GM12878 (cell line): ENCODE measurements at regions of chr2 and their contacts with region 1.

Region 1: DNA sequence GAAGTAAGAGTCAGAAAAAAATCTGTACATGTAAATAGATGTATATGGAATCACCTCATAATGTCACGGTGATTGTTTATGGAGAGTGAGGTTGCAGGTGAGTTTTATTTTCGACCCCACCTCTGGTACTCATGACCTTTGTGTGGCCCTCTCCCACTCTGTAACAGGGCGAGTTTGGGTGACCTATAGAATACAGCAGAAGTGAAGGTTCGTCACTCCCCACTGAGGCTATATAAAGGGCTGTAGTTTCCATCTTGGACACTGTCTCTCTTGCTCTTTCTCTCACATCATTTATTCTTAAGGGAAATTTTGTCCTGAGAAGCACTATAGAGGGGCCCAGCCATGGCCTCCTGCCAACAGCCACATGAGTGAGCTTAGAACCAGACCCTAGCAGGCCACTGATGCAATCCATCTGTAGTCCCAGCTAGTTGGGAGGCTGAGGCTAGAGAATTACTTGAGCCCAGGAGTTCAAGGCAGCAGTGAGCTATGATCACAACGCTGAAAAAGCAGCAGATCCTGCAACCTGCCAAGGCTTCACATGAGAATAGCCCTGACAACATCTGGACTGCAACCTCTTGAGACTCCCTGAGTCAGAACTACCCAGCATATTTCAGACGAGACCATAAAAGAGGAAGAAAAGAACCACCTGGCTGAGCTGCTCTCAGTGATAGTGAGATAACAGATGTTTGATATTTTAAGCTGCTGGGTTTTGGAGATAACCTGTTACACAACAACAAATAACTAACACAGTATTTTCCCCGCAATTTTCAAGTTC is 74.3 kb upstream of the SLC1A4 start:
- DNase-seq: peak; percentile 96
- ATAC-seq: peak; percentile 68
- H3K4me3 ChIP-seq: peak overlapping the region; percentile 41
- H3K27ac ChIP-seq: peak overlapping the region; percentile 81
- H3K4me1 ChIP-seq: peaks cover 62% of the 10 kb centered on the region
- H3K27me3 ChIP-seq: no peaks in the 10 kb centered on the region
- CTCF ChIP-seq: no peak
- EP300 ChIP-seq: peak; percentile 73 to 80; a peak in 3 of 4 replicates
- POLR2A ChIP-seq: peak; percentile 72
- RAD21 ChIP-seq: no peak

Region 2: GRCh38 chr2:64463781-64464180 is 451.1 kb before region 1 on chr2:
- CTCF ChIA-PET with region 1: no interaction called
- POLR2A ChIA-PET with region 1: no interaction called
- RAD21 ChIA-PET with region 1: no interaction called
- SMC1A ChIA-PET with region 1: no interaction called
- in situ Hi-C with region 1: no loop called
- intact Hi-C with region 1: no loop called
- DNase-seq: no peak
- ATAC-seq: no peak
- H3K4me3 ChIP-seq: no peak overlapping the region
- H3K27ac ChIP-seq: no peak overlapping the region
- H3K4me1 ChIP-seq: no peaks in the 10 kb centered on the region
- H3K27me3 ChIP-seq: no peaks in the 10 kb centered on the region
- CTCF ChIP-seq: no peak
- EP300 ChIP-seq: no peak
- POLR2A ChIP-seq: no peak
- RAD21 ChIP-seq: no peak

Region 3: DNA sequence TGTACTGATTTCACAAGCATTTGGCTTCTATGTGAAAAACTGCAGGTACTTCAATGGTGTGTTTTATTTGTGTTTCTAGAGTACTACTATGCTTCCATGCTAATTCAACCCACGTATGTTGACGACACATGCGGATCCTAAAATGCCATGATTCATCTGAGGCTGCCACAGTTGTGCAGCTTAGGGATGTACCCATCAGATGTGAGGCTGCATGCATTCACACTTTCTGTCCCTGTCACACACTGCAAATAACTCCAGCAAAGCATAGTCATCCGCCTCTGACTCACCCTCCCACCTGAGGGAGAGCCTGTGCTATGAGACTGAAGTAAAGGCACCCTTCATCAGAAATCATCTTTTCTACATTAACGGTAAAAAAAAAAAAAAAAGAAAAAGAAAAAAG is 239.1 kb before region 1 on chr2:
- CTCF ChIA-PET with region 1: no interaction called
- POLR2A ChIA-PET with region 1: no interaction called
- RAD21 ChIA-PET with region 1: no interaction called
- SMC1A ChIA-PET with region 1: no interaction called
- in situ Hi-C with region 1: no loop called
- intact Hi-C with region 1: no loop called
- DNase-seq: no peak
- ATAC-seq: peak; percentile 38; the same call in 2 of the 3 replicates
- H3K4me3 ChIP-seq: no peak overlapping the region
- H3K27ac ChIP-seq: no peak overlapping the region
- H3K4me1 ChIP-seq: peaks cover 20% of the 10 kb centered on the region
- H3K27me3 ChIP-seq: no peaks in the 10 kb centered on the region
- CTCF ChIP-seq: no peak
- EP300 ChIP-seq: no peak
- POLR2A ChIP-seq: no peak
- RAD21 ChIP-seq: no peak

Region 4: DNA sequence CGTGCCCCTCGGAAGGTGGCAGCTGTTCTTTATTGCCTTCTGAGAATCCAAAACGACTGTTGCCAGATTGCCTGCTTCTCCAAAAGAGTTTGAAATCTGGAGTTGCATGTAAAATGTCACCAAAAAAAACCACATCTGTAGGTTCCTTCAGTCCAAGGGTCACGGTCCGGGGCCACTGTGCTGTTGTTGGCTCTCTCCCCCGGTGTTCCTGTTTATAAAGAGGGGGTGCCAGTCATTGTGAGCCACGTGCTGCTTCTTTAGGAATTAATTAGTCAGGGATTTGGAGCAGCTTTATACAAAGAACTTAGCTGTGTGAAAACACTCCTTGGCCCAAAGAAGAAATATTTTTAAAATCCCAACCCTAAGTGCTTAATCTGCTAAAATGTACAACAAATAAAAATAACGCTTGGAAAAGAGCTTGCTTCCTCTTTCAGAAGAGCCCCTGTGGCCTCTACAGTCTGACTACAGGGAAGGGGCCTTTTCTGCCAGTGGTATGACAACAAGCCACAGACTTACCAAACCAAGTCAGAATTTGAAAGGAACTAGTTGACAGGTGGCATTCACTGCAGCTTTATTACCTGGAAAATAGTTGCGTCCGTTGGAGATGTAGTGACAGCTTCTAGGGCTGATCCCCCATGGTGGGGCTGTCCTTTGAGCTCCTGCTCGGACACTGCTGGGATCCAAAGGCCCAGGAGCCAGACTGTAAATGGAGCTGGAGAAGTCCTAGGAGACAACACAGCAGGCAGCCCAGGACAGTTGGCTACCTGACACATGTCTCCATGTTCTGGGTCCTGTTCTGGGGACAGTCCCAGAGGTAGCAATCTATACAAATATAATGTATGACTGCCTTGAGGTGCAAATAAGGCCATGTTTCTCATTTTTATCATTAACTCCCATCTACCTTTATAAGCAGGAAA is 10.3 kb before region 1 on chr2:
- CTCF ChIA-PET with region 1: interaction called, 19 read pairs
- POLR2A ChIA-PET with region 1: interaction called, 4 read pairs
- RAD21 ChIA-PET with region 1: interaction called, 21 read pairs
- SMC1A ChIA-PET with region 1: interaction called, 14 read pairs
- in situ Hi-C with region 1: no loop called
- intact Hi-C with region 1: no loop called
- DNase-seq: no peak
- ATAC-seq: peak; percentile 77
- H3K4me3 ChIP-seq: no peak overlapping the region
- H3K27ac ChIP-seq: peak overlapping the region; percentile 20
- H3K4me1 ChIP-seq: peaks cover 13% of the 10 kb centered on the region
- H3K27me3 ChIP-seq: no peaks in the 10 kb centered on the region
- CTCF ChIP-seq: no peak
- EP300 ChIP-seq: no peak
- POLR2A ChIP-seq: no peak
- RAD21 ChIP-seq: no peak

Region 5: DNA sequence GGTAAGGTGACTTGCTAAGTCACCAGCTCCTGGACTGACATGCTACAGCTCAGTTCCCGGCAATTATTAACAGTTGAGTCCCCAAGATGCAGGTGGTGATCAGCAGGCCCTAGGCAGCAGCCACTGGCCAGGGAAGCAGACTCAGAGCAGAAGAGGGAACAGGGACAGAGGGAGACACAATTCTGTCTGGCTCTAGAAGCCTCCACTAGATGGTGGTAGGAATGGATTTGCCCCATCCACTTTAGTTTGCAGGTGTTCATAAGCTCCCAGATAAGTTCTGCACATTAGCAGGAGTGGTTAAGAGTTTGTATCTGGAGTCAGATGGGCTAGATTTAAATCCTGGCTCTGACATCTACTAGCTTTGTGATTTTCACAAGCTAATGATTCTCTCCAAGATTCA is 48.8 kb after region 1 on chr2:
- CTCF ChIA-PET with region 1: interaction called, 12 read pairs
- POLR2A ChIA-PET with region 1: interaction called, 3 read pairs
- RAD21 ChIA-PET with region 1: interaction called, 4 read pairs
- SMC1A ChIA-PET with region 1: interaction called, 4 read pairs
- in situ Hi-C with region 1: no loop called
- intact Hi-C with region 1: no loop called
- DNase-seq: no peak
- ATAC-seq: no peak; the same call in 2 of the 3 replicates
- H3K4me3 ChIP-seq: no peak overlapping the region
- H3K27ac ChIP-seq: no peak overlapping the region
- H3K4me1 ChIP-seq: no peaks in the 10 kb centered on the region
- H3K27me3 ChIP-seq: no peaks in the 10 kb centered on the region
- CTCF ChIP-seq: 0 out of 6 replicates have a peak, but pooled peaks of 1 of the 3 experiments have one; percentile 6
- EP300 ChIP-seq: no peak
- POLR2A ChIP-seq: no peak
- RAD21 ChIP-seq: 0 out of 2 replicates have a peak, but pooled peaks have one; percentile 17

Region 6: GRCh38 chr2:65017335-65017734 is 102.4 kb after region 1 on chr2:
- CTCF ChIA-PET with region 1: interaction called, 24 read pairs
- POLR2A ChIA-PET with region 1: interaction called, 3 read pairs
- RAD21 ChIA-PET with region 1: interaction called, 14 read pairs
- SMC1A ChIA-PET with region 1: interaction called, 3 read pairs
- in situ Hi-C with region 1: no loop called
- intact Hi-C with region 1: no loop called
- DNase-seq: no peak
- ATAC-seq: peak; percentile 72
- H3K4me3 ChIP-seq: no peak overlapping the region
- H3K27ac ChIP-seq: peak overlapping the region; percentile 38
- H3K4me1 ChIP-seq: peaks cover 24% of the 10 kb centered on the region
- H3K27me3 ChIP-seq: no peaks in the 10 kb centered on the region
- CTCF ChIP-seq: peak; percentile 46 to 53 (median 51); a peak in 5 of 6 replicates
- EP300 ChIP-seq: no peak
- POLR2A ChIP-seq: no peak
- RAD21 ChIP-seq: peak; percentile 52; the same call in 1 of the 2 replicates

Region 7: DNA sequence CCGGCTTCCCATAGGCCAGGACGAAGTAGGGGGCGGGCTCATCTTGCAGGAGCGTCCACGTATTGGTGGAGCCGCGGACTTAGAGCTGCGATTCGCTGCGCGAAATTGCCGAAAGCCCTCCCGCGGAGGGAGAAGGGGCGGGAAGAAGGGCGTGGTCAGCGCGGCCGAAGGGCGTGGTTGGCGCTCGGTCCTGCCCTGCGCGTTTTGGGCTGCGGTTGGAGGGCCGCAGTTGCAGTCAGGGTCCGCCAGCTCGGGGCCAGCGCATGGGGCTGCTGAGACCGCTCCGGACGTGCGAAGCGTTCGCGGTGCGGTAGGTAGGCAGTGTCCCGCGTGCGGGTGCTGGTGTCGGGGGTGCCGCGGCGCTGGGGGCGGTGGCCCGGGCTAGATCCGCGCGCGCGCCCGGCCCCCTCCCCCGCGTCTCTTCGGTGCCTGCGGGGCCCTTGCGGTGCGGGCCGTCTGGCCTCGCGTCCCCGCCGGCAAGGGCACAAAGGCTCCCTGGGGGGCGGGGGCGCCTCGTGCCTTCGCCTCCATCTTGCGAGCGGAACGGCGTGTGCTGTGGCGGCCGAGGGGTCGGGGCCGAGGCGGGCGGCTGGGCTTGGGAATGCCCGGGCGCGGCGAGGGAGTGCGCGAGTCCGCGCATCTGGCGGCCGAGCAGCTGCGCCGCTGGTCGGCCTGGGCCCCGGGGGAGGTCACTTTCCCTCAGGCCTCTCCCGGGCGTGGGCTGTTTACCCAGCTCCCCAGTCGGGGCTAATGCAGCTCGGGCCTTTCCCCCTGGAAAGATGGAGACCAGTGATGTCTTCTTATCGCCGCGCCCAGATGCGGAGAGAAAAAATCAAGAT is 141.5 kb after region 1 on chr2 and contains the start of gene CEP68:
- CTCF ChIA-PET with region 1: interaction called, 22 read pairs
- POLR2A ChIA-PET with region 1: interaction called, 7 read pairs
- RAD21 ChIA-PET with region 1: interaction called, 49 read pairs
- SMC1A ChIA-PET with region 1: interaction called, 36 read pairs
- in situ Hi-C with region 1: no loop called
- intact Hi-C with region 1: no loop called
- DNase-seq: peak; percentile 90
- ATAC-seq: peak; percentile 90
- H3K4me3 ChIP-seq: peak within 1 kb of the TSS; percentile 74
- H3K27ac ChIP-seq: peak within 1 kb of the TSS; percentile 63
- H3K4me1 ChIP-seq: peaks cover 46% of the 10 kb centered on the region
- H3K27me3 ChIP-seq: no peaks in the 10 kb centered on the region
- CTCF ChIP-seq: no peak
- EP300 ChIP-seq: no peak
- POLR2A ChIP-seq: peak; percentile 92
- RAD21 ChIP-seq: no peak
- polyA plus RNA-seq, gene CEP68: 1.1 to 2.2 TPM